B cell (primary cell): ENCODE measurements at regions of chr11 and their contacts with region 1.

Region 1: DNA sequence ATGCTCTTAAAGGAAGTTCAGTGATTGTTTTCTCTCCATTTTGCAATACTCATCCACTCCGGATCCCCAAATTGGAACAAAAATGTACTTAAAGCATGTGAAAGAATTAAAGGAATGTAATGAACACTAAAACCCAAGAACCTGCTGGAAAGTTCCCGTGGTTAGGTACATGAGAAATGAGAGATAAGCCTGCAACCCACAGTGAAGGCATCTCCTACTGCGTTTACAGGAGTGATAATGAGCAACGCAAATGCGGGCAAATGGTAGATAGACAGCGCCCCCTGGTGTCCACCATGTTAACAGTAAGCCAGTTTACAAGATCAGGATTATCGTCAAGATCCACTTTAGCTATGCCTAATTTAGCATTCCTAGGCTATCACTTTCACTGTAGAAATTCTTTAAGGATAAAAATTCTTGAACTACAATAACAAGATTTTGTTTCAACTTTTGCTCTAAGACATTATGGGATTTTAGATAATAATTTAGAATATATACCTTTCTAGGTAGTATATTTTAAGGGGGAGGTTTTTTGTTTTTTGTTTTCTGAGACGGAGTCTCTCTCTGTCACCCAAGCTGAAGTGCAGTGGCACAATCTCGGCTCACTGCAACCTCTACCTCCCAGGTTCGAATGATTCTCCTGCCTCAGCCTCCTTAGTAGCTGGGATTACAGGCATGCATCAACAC is 29.9 kb downstream of the ALG9 start:
- DNase-seq: peak; percentile 86
- ATAC-seq: peak; percentile 86
- H3K4me3 ChIP-seq: no peak overlapping the region
- H3K4me3 Mint-ChIP-seq: no peak overlapping the region
- H3K27ac ChIP-seq: no peak overlapping the region
- H3K27ac Mint-ChIP-seq: no peak overlapping the region
- H3K4me1 ChIP-seq: peaks cover 3% of the 10 kb centered on the region in 2 donors
- H3K4me1 Mint-ChIP-seq: peaks cover 6% of the 10 kb centered on the region
- H3K27me3 ChIP-seq: no peaks in the 10 kb centered on the region
- H3K27me3 Mint-ChIP-seq: no peaks in the 10 kb centered on the region
- CTCF ChIP-seq: peak; percentile 92

Region 2: GRCh38 chr11:111565114-111565720 is 276.3 kb before region 1 on chr11:
- CTCF ChIA-PET with region 1: interaction called, 21 read pairs
- POLR2A ChIA-PET with region 1: no interaction called
- intact Hi-C with region 1: loop called (anchors 1 kb)
- DNase-seq: peak; percentile 72
- ATAC-seq: no peak
- H3K4me3 ChIP-seq: no peak overlapping the region
- H3K4me3 Mint-ChIP-seq: no peak overlapping the region
- H3K27ac ChIP-seq: no peak overlapping the region
- H3K27ac Mint-ChIP-seq: no peak overlapping the region
- H3K4me1 ChIP-seq: no peaks in the 10 kb centered on the region
- H3K4me1 Mint-ChIP-seq: no peaks in the 10 kb centered on the region
- H3K27me3 ChIP-seq: no peaks in the 10 kb centered on the region
- H3K27me3 Mint-ChIP-seq: peaks cover 8% of the 10 kb centered on the region
- CTCF ChIP-seq: peak; percentile 94

Region 3: GRCh38 chr11:111573821-111574249 is 267.7 kb before region 1 on chr11:
- CTCF ChIA-PET with region 1: interaction called, 11 read pairs
- POLR2A ChIA-PET with region 1: no interaction called
- intact Hi-C with region 1: no loop called
- DNase-seq: no peak
- ATAC-seq: no peak
- H3K4me3 ChIP-seq: no peak overlapping the region
- H3K4me3 Mint-ChIP-seq: no peak overlapping the region
- H3K27ac ChIP-seq: no peak overlapping the region
- H3K27ac Mint-ChIP-seq: no peak overlapping the region
- H3K4me1 ChIP-seq: no peaks in the 10 kb centered on the region
- H3K4me1 Mint-ChIP-seq: peaks cover 7% of the 10 kb centered on the region
- H3K27me3 ChIP-seq: peaks cover 0 to 4% (median 0%) of the 10 kb centered on the region in 4 experiments
- H3K27me3 Mint-ChIP-seq: peaks cover 14% of the 10 kb centered on the region
- CTCF ChIP-seq: no peak

Region 4: GRCh38 chr11:111586388-111586831 is 255.1 kb before region 1 on chr11:
- CTCF ChIA-PET with region 1: interaction called, 101 read pairs
- POLR2A ChIA-PET with region 1: no interaction called
- intact Hi-C with region 1: loop called (anchors 1 kb)
- DNase-seq: peak; percentile 75
- ATAC-seq: peak; percentile 57
- H3K4me3 ChIP-seq: no peak overlapping the region
- H3K4me3 Mint-ChIP-seq: no peak overlapping the region
- H3K27ac ChIP-seq: no peak overlapping the region
- H3K27ac Mint-ChIP-seq: no peak overlapping the region
- H3K4me1 ChIP-seq: no peaks in the 10 kb centered on the region
- H3K4me1 Mint-ChIP-seq: peaks cover 5% of the 10 kb centered on the region
- H3K27me3 ChIP-seq: no peaks in the 10 kb centered on the region
- H3K27me3 Mint-ChIP-seq: no peaks in the 10 kb centered on the region
- CTCF ChIP-seq: peak; percentile 85

Region 5: DNA sequence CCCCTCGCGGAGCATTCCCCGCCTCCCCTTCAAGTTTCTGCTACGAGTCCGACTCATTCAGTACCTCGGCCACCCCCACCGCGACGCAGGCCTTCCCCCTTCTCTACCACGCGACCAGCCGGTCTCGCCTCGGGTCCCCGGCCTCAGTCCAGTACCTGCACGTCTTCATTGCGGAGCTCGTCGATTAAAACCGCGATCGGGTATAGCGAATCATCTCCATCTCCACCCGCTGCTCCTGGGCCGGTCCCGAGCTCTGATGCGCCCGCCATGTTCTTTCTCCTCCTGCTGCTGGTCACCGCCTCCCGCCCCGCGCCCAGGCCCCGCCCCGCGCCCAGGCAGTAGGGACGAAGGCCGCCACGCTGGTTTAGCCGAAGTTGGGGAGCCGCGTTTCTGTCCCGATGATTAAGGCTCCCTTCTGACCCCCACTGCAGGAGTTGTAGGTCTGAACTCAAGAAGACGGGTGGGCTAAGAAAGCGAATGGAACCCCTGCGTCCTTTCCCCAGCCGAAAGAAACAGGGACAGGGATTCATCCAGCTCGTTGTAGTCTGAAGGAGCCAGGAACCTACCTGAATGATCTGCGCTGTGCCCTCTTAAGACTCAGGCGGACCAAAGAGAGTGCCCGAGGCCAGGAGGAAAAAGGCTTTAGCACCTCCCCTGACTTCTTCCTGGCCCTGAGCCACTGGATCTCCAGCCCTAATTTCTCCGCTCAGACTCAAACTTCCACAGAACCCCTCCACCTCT is 75.2 kb before region 1 on chr11 and contains the start of gene PPP2R1B:
- CTCF ChIA-PET with region 1: interaction called, 6 read pairs
- POLR2A ChIA-PET with region 1: no interaction called
- intact Hi-C with region 1: loop called (anchors 1 kb)
- DNase-seq: peak; percentile 88
- ATAC-seq: peak; percentile 97
- H3K4me3 ChIP-seq: peak within 1 kb of the TSS; percentile 74 to 97 (median 90)
- H3K4me3 Mint-ChIP-seq: peak within 1 kb of the TSS; percentile 100
- H3K27ac ChIP-seq: peak within 1 kb of the TSS; percentile 53 to 77
- H3K27ac Mint-ChIP-seq: peak within 1 kb of the TSS; percentile 97
- H3K4me1 ChIP-seq: peaks cover 9 to 16% of the 10 kb centered on the region in 2 donors
- H3K4me1 Mint-ChIP-seq: peaks cover 37% of the 10 kb centered on the region
- H3K27me3 ChIP-seq: no peaks in the 10 kb centered on the region
- H3K27me3 Mint-ChIP-seq: no peaks in the 10 kb centered on the region
- CTCF ChIP-seq: no peak
- total RNA-seq, gene PPP2R1B: 35.6 and 37.0 TPM in 2 replicates